SK-N-SH (cell line): ENCODE measurements at regions of chr12 and their contacts with region 1.

Region 1: DNA sequence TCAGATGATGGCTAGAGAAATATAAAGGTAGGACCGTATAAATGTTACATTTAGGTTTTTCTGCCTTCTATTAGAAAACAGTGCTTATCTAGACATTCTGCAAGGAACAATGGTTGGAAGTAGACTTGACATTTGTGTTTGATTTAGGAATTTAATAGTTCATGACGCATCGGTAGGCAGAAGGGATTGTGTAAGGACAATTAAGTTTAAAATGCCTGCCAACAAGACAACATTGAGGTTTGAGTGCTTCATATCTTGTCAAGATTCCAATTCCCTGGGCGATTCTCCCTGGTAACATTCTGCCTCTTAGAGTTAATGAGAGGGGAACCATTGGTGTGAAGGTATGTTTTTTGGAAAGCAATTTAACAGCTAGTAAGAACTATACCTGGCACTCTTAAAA is 186.8 kb upstream of the RBM19 start:
- DNase-seq: no peak
- H3K4me3 ChIP-seq: no peak overlapping the region
- H3K27ac ChIP-seq: no peak overlapping the region
- H3K4me1 ChIP-seq: no peaks in the 10 kb centered on the region
- H3K27me3 ChIP-seq: no peaks in the 10 kb centered on the region
- CTCF ChIP-seq: no peak
- EP300 ChIP-seq: no peak
- RAD21 ChIP-seq: no peak

Region 2: DNA sequence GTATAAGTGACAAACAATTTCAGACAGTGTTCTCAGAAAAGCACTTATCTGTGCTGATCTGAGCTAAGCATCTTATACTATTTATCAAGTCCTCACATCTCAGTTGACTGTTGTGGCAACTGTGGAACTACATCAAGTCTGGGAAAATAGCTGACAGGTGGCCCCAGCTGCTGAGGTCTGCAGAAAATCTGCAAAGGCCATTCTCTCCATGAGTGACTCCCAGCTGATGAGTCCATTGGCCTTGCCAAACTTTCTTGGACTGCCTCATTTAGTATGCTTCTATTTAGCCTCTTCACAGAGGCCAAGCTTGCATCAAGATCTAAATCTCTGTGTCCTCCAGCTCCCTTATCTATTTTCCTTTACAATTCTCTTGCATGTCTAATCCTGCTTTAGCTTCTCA is 12.3 kb before region 1 on chr12:
- CTCF ChIA-PET with region 1: no interaction called
- POLR2A ChIA-PET with region 1: no interaction called
- DNase-seq: no peak
- H3K4me3 ChIP-seq: no peak overlapping the region
- H3K27ac ChIP-seq: no peak overlapping the region
- H3K4me1 ChIP-seq: no peaks in the 10 kb centered on the region
- H3K27me3 ChIP-seq: no peaks in the 10 kb centered on the region
- CTCF ChIP-seq: no peak
- EP300 ChIP-seq: no peak
- RAD21 ChIP-seq: no peak

Region 3: GRCh38 chr12:114166362-114166761 is 13.5 kb after region 1 on chr12:
- CTCF ChIA-PET with region 1: interaction called, 12 read pairs
- POLR2A ChIA-PET with region 1: no interaction called
- DNase-seq: peak; percentile 34
- H3K4me3 ChIP-seq: peak overlapping the region in 1 of 2 experiments; percentile 41; a peak in 1 of 4 replicates
- H3K27ac ChIP-seq: no peak overlapping the region
- H3K4me1 ChIP-seq: no peaks in the 10 kb centered on the region
- H3K27me3 ChIP-seq: no peaks in the 10 kb centered on the region; the same call in 1 of the 2 replicates
- CTCF ChIP-seq: peak; percentile 66
- EP300 ChIP-seq: no peak
- RAD21 ChIP-seq: peak; percentile 70